Activated CD8-positive, alpha-beta memory T cell treated with anti-CD3 and anti-CD28 coated beads, Interleukin-2, amount 10 ng/mL, durations not matched to agents 7 days and 5 days (primary cell): ENCODE measurements at regions of chr5 and their contacts with region 1.

Region 1: DNA sequence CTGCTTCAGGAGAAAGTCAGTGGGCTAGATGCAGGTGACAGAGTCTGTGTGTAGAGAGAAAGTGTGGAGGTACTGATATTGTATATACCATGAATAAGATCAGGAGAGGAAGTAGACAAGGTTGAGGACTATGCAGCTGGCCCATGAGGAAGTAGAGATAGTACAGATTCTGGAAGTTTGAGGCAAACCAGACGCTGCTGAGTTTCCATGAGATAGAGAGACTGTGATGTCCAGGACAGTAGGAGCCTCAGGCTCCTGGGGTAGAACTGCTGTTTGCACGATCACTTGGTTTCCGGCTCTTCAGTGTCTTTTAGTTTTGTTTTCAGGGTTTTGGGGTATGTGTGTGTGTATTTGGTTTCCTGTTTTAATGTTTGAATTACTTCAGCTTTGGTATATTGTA is 13.6 kb downstream of the OTULINL start:
- DNase-seq: peak; percentile 80
- ATAC-seq: peak; percentile 79
- H3K4me3 Mint-ChIP-seq: peak overlapping the region; percentile 64
- H3K27ac Mint-ChIP-seq: peak overlapping the region; percentile 98
- H3K4me1 Mint-ChIP-seq: peaks cover 87% of the 10 kb centered on the region
- H3K27me3 Mint-ChIP-seq: no peaks in the 10 kb centered on the region

Region 2: GRCh38 chr5:14447958-14448911 is 147.0 kb before region 1 on chr5:
- CTCF ChIA-PET with region 1: no interaction called
- DNase-seq: no peak
- ATAC-seq: peak; percentile 16
- H3K4me3 Mint-ChIP-seq: no peak overlapping the region
- H3K27ac Mint-ChIP-seq: no peak overlapping the region
- H3K4me1 Mint-ChIP-seq: peaks cover 19% of the 10 kb centered on the region
- H3K27me3 Mint-ChIP-seq: peaks cover 13% of the 10 kb centered on the region

Region 3: GRCh38 chr5:14491015-14491915 is 103.9 kb before region 1 on chr5:
- CTCF ChIA-PET with region 1: no interaction called
- DNase-seq: no peak
- ATAC-seq: no peak
- H3K4me3 Mint-ChIP-seq: no peak overlapping the region
- H3K27ac Mint-ChIP-seq: no peak overlapping the region
- H3K4me1 Mint-ChIP-seq: peaks cover 7% of the 10 kb centered on the region
- H3K27me3 Mint-ChIP-seq: no peaks in the 10 kb centered on the region

Region 4: GRCh38 chr5:14581333-14581890 is 13.8 kb before region 1 on chr5 and contains the start of gene OTULINL:
- CTCF ChIA-PET with region 1: interaction called, 46 read pairs
- DNase-seq: peak; percentile 91
- ATAC-seq: peak; percentile 92
- H3K4me3 Mint-ChIP-seq: peak within 1 kb of the TSS; percentile 80
- H3K27ac Mint-ChIP-seq: peak within 1 kb of the TSS; percentile 79
- H3K4me1 Mint-ChIP-seq: peaks cover 26% of the 10 kb centered on the region
- H3K27me3 Mint-ChIP-seq: peaks cover 24% of the 10 kb centered on the region
- total RNA-seq, gene OTULINL: 46.7 to 61.5 TPM